Dorsolateral prefrontal cortex (tissue), 120 donors: ENCODE measurements at regions of chr7 and their contacts with region 1.

Region 1: GRCh38 chr7:29921404-29922010 is 68.1 kb downstream of the SCRN1 start:
- DNase-seq: peak in 1 of 10 donors; percentile 34
- H3K4me3 ChIP-seq: no peak overlapping the region
- H3K27ac ChIP-seq: peak overlapping the region in 43 of 59 donors; percentile 10 to 90 (median 70)
- H3K27me3 ChIP-seq: no peaks in the 10 kb centered on the region
- CTCF ChIP-seq: peak; percentile 70 to 93 (median 87)

Region 2: DNA sequence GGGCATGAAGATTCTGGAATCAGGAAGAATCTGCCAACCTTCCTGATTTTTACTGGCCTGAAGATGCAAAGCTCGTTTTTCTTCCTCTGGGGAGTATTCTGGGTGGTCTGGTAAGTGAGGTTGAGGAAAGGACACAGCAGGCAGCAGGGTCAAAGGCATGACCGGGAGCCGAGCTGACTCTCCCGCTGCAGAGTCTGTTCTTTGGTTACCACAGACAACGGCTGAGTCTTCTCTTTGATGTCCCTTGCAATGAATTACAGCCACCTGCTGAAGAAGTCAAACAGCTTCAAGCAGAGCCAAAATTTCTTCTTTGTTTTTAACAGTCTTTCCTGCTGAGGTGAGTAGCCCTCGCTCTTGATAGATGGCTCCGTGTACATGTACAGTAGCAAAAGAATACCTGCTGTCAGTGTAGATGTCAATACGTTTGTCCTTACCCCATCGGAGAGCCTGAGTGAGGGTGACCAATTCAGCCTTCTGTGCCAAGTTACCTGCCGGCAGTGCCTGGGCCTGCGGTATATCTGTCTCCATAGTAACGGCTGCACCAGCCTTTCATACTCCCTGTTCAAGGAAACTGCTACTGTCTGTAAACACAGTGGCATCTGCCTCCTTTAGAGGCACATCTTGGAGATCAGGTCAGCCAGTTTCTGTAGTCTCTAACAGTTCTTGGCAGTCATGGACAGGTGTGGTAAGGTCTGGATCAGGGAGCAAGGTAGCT is 281.5 kb before region 1 on chr7:
- intact Hi-C with region 1: loop called (anchors 5 kb)
- DNase-seq: peak in 1 of 10 donors; percentile 46
- H3K4me3 ChIP-seq: no peak overlapping the region
- H3K27ac ChIP-seq: no peak overlapping the region
- H3K27me3 ChIP-seq: no peaks in the 10 kb centered on the region
- CTCF ChIP-seq: no peak

Region 3: DNA sequence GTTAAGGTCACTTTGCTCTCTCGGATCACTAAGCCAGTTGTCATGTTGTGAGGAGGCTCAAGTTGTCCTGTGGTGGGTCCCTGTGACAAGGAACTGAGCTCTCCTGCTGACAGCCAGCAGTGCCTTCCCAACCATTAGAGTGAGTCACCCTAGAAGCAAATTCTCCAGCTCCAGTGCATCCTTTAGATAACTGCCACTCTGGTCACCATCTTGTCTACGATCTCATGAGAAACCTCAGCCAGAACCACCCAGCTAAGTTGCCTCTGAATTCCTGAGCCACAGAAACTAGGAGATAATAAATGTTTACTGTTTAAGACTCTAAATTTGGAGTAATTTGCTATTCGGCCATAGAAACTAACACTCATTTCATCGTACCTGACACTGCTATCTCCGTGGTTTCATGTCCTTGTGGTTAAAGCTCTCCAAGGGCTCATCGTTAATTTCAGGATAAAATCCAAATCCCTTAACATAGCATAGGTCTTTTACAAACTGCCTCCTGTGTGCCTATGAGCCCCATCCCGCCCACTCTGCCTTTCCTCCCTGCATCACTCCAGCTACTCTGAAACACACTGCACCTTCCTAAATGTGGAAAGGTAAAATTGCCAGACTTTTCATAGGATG is 171.7 kb before region 1 on chr7:
- intact Hi-C with region 1: loop called (anchors 5 kb)
- DNase-seq: peak in 2 of 10 donors; percentile 18 to 42
- H3K4me3 ChIP-seq: no peak overlapping the region
- H3K27ac ChIP-seq: peak overlapping the region in 17 of 59 donors; percentile 6 to 74 (median 36)
- H3K27me3 ChIP-seq: no peaks in the 10 kb centered on the region
- CTCF ChIP-seq: no peak

Region 4: GRCh38 chr7:29962035-29962434 is 40.5 kb after region 1 on chr7:
- intact Hi-C with region 1: loop called in 1 of 2 experiments (anchors 5 kb)
- DNase-seq: no peak
- H3K4me3 ChIP-seq: no peak overlapping the region
- H3K27ac ChIP-seq: peak overlapping the region in 10 of 59 donors; percentile 1 to 86 (median 72)
- H3K27me3 ChIP-seq: no peaks in the 10 kb centered on the region
- CTCF ChIP-seq: no peak

Region 5: DNA sequence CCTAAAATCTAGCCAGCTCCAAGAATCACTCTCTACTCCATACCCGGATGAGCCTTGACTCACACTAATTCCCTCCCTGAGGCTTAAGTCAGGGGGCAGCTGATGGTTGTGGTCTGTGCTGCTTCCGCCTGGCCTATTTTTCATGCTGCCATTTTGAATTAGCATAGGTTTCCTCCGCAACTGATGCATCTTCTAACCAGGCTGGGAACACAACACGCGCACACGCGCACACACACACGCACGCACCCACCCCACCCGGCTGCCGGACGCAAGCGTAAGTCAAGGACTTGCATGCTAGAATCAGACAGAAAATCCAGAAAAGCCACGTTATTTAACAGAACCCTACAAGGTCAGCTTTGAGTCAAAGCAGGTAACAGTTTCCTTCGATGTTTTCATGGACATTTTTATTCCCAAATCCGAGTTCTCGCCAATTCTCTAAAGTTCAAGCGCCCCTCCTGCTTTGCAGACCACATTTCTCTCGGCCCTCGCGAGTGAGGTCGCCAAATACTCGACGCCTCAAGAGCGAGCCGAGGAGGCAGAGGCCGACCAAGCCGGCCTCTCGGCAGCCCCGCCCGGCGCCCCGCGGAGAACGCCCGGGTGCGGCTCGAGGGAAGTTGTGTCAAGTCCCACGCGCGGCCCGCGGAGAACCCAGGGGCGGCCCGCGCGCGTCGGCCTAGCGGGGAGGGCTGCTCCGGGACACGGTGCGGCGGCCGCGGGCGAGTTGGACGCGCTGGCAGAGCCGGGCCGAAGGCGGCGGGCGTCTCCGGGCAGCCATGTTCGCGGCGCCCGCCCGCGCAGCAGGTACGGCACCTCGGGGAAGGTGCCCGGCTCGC is 67.1 kb after region 1 on chr7:
- intact Hi-C with region 1: loop called in 1 of 2 experiments (anchors 10 kb)
- DNase-seq: peak in 8 of 10 donors; percentile 39 to 72 (median 62)
- H3K4me3 ChIP-seq: peak overlapping the region; percentile 74 to 99 (median 95)
- H3K27ac ChIP-seq: peak overlapping the region; percentile 87 to 100 (median 97)
- H3K27me3 ChIP-seq: no peaks in the 10 kb centered on the region
- CTCF ChIP-seq: no peak

Region 6: DNA sequence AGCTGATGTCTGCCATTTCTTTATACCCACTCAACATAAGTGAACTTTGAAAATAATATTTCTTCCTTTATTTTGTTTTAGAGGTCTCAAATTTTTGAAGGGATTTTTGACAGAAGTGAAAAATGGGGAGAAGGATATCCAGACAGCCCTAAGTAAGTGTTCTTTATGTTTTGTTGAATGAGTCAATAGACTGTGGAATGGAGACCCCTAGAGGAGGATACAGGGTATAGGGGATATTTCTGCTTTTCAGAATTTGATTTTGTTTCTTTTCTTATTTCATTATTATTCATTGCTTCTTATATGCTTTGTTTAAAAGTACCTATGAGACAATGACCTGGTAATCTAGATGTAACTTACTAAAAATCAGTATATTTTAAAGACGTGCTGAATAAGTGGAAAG is 141.1 kb after region 1 on chr7:
- intact Hi-C with region 1: loop called in 1 of 2 experiments (anchors 10 kb)
- DNase-seq: no peak
- H3K4me3 ChIP-seq: no peak overlapping the region
- H3K27ac ChIP-seq: no peak overlapping the region
- H3K27me3 ChIP-seq: no peaks in the 10 kb centered on the region
- CTCF ChIP-seq: peak; percentile 38 to 87 (median 74)